B cell (primary cell): ENCODE measurements at regions of chr18 and their contacts with region 1.

Region 1: GRCh38 chr18:20971886-20972267 is 139.7 kb downstream of the ROCK1 start:
- DNase-seq: peak; percentile 27
- ATAC-seq: no peak
- H3K4me3 ChIP-seq: no peak overlapping the region
- H3K4me3 Mint-ChIP-seq: no peak overlapping the region
- H3K27ac ChIP-seq: no peak overlapping the region
- H3K27ac Mint-ChIP-seq: no peak overlapping the region
- H3K4me1 ChIP-seq: no peaks in the 10 kb centered on the region
- H3K4me1 Mint-ChIP-seq: no peaks in the 10 kb centered on the region
- H3K27me3 ChIP-seq: no peaks in the 10 kb centered on the region
- H3K27me3 Mint-ChIP-seq: no peaks in the 10 kb centered on the region
- CTCF ChIP-seq: peak; percentile 55

Region 2: DNA sequence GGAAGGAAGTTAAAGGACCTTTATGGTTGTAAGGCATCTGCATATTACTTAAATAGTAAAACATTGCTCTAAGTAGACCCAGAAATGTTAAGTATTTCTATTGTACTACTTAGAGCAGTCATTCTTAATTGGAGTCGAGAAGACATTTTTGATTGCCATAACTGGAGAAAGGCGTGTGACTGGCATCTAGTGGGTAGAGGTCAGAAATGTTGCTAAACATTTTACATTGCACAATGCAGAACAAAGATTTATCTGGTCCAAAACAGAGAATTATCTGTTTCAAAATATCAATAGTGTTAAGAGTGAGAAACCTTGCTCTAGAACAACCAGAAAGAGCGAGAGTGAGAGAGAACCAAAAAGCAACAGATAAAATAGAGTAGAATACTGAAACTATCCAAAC is 163.0 kb after region 1 on chr18:
- CTCF ChIA-PET with region 1: interaction called, 7 read pairs
- POLR2A ChIA-PET with region 1: no interaction called
- intact Hi-C with region 1: loop called (anchors 1 kb)
- DNase-seq: peak; percentile 51
- ATAC-seq: no peak
- H3K4me3 ChIP-seq: no peak overlapping the region
- H3K4me3 Mint-ChIP-seq: no peak overlapping the region
- H3K27ac ChIP-seq: no peak overlapping the region
- H3K27ac Mint-ChIP-seq: no peak overlapping the region
- H3K4me1 ChIP-seq: no peaks in the 10 kb centered on the region
- H3K4me1 Mint-ChIP-seq: no peaks in the 10 kb centered on the region
- H3K27me3 ChIP-seq: no peaks in the 10 kb centered on the region
- H3K27me3 Mint-ChIP-seq: no peaks in the 10 kb centered on the region
- CTCF ChIP-seq: peak; percentile 75

Region 3: GRCh38 chr18:21145371-21145770 is 173.5 kb after region 1 on chr18:
- CTCF ChIA-PET with region 1: no interaction called
- POLR2A ChIA-PET with region 1: no interaction called
- intact Hi-C with region 1: no loop called
- DNase-seq: no peak
- ATAC-seq: no peak
- H3K4me3 ChIP-seq: no peak overlapping the region
- H3K4me3 Mint-ChIP-seq: no peak overlapping the region
- H3K27ac ChIP-seq: no peak overlapping the region
- H3K27ac Mint-ChIP-seq: no peak overlapping the region
- H3K4me1 ChIP-seq: no peaks in the 10 kb centered on the region
- H3K4me1 Mint-ChIP-seq: no peaks in the 10 kb centered on the region
- H3K27me3 ChIP-seq: no peaks in the 10 kb centered on the region
- H3K27me3 Mint-ChIP-seq: peaks cover 5% of the 10 kb centered on the region
- CTCF ChIP-seq: no peak

Region 4: GRCh38 chr18:21218630-21219261 is 246.9 kb after region 1 on chr18:
- CTCF ChIA-PET with region 1: no interaction called
- POLR2A ChIA-PET with region 1: no interaction called
- intact Hi-C with region 1: no loop called
- DNase-seq: no peak
- ATAC-seq: no peak
- H3K4me3 ChIP-seq: no peak overlapping the region
- H3K4me3 Mint-ChIP-seq: no peak overlapping the region
- H3K27ac ChIP-seq: no peak overlapping the region
- H3K27ac Mint-ChIP-seq: no peak overlapping the region
- H3K4me1 ChIP-seq: no peaks in the 10 kb centered on the region
- H3K4me1 Mint-ChIP-seq: no peaks in the 10 kb centered on the region
- H3K27me3 ChIP-seq: no peaks in the 10 kb centered on the region
- H3K27me3 Mint-ChIP-seq: no peaks in the 10 kb centered on the region
- CTCF ChIP-seq: no peak

Region 5: GRCh38 chr18:21330122-21330701 is 358.3 kb after region 1 on chr18:
- CTCF ChIA-PET with region 1: no interaction called
- POLR2A ChIA-PET with region 1: no interaction called
- intact Hi-C with region 1: no loop called
- DNase-seq: no peak
- ATAC-seq: no peak
- H3K4me3 ChIP-seq: no peak overlapping the region
- H3K4me3 Mint-ChIP-seq: no peak overlapping the region
- H3K27ac ChIP-seq: no peak overlapping the region
- H3K27ac Mint-ChIP-seq: no peak overlapping the region
- H3K4me1 ChIP-seq: no peaks in the 10 kb centered on the region
- H3K4me1 Mint-ChIP-seq: no peaks in the 10 kb centered on the region
- H3K27me3 ChIP-seq: no peaks in the 10 kb centered on the region
- H3K27me3 Mint-ChIP-seq: peaks cover 3% of the 10 kb centered on the region
- CTCF ChIP-seq: no peak

Region 6: DNA sequence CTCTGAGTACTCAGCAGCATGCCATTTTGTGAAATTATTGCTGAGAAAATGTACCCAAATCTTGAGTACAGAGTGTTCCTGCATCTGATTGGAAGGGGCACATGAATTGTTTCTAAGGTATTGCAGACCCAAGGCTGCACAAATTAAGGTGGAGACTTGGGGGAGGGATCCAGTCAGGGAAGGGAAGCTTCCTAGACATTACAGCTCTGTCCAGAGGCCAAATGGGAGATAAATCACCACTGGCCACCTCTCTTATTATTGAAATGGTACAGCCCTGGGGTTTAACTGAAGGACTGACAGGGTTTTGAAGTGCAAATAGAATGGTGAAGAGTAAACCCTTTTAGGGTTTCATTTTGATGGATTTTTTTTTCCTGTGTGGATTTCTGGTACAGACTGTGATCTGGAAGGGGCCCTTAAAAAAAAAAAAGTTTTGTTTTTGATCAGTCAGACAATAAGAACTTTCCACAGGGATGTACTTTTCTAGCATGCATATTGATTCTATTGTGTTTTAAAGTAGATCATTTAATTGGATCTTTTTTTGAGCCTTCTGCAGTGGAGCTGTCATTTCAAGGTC is 389.5 kb after region 1 on chr18:
- CTCF ChIA-PET with region 1: no interaction called
- POLR2A ChIA-PET with region 1: no interaction called
- intact Hi-C with region 1: no loop called
- DNase-seq: no peak
- ATAC-seq: no peak
- H3K4me3 ChIP-seq: no peak overlapping the region
- H3K4me3 Mint-ChIP-seq: no peak overlapping the region
- H3K27ac ChIP-seq: no peak overlapping the region
- H3K27ac Mint-ChIP-seq: no peak overlapping the region
- H3K4me1 ChIP-seq: no peaks in the 10 kb centered on the region
- H3K4me1 Mint-ChIP-seq: no peaks in the 10 kb centered on the region
- H3K27me3 ChIP-seq: no peaks in the 10 kb centered on the region
- H3K27me3 Mint-ChIP-seq: peaks cover 5% of the 10 kb centered on the region
- CTCF ChIP-seq: no peak